ENCODE measurements at regions of chr9 and their contacts with region 1.

Region 1: GRCh38 chr9:13088720-13089427 is 190.6 kb downstream of the MPDZ start:
- DNase-seq: no peak
- H3K4me3 ChIP-seq: no peak overlapping the region
- H3K27me3 ChIP-seq: no peaks in the 10 kb centered on the region
- CTCF ChIP-seq: peak; percentile 74

Region 2: GRCh38 chr9:12719431-12719830 is 369.4 kb before region 1 on chr9:
- CTCF ChIA-PET with region 1: interaction called, 58 read pairs
- POLR2A ChIA-PET with region 1: no interaction called
- DNase-seq: no peak
- H3K4me3 ChIP-seq: no peak overlapping the region
- H3K27me3 ChIP-seq: no peaks in the 10 kb centered on the region
- CTCF ChIP-seq: peak; percentile 53

Region 3: DNA sequence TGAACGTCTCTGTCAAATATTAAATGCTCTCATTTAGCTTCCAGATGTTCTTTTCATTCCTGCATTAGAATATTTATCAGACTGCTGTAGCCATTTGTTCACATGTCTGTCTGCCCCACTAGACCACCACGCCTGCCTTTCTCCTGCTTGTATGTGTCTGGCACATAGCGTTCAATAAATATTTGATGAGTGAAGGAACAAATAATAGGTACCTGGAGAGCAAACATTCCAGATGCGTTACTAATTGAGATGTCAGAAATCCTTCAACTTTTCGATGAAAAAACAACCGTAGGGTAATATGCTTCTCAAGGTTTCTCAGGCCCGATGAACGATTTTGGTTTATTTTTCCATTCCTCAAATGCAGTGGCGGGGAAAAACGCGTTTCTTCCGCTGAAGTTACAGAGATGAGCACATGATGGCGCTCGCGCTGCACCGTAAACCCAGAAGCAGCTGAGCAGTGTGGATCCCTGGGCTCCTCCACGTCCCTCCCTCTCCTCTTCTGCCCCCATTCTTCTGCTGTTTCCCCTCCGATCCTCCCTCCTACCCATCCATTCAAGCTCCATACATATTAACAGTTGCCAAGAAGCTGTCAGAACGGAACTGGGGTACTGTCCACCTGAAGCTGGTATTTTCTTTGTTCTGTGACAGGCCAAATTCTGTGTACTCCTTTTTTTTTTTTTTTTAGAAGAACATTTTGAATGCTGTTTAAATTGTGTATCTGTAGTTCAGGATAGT is 54.7 kb before region 1 on chr9:
- CTCF ChIA-PET with region 1: interaction called, 19 read pairs
- POLR2A ChIA-PET with region 1: interaction called, 6 read pairs
- DNase-seq: no peak
- H3K4me3 ChIP-seq: no peak overlapping the region
- H3K27me3 ChIP-seq: no peaks in the 10 kb centered on the region
- CTCF ChIP-seq: peak; percentile 81

Region 4: DNA sequence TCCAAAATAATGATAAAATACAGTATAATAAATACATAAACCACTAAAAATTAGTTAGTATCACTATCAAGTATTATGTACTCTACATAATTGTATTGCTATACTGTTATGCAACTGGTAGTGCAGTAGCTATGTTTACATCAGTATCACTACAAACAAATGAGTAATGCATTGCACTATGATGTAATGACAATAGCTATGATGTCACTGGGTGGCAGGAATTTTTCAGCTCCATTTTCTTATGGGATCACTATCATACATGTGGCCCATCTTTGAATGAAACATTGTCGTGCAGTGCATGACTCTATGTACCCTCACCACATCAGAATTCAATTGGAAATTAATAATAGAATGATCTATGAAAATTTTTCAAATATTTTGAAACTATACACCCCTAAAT is 10.7 kb before region 1 on chr9:
- CTCF ChIA-PET with region 1: interaction called, 12 read pairs
- POLR2A ChIA-PET with region 1: no interaction called
- DNase-seq: no peak
- H3K4me3 ChIP-seq: no peak overlapping the region
- H3K27me3 ChIP-seq: no peaks in the 10 kb centered on the region
- CTCF ChIP-seq: no peak

Region 5: GRCh38 chr9:13110766-13111417 is 22.0 kb after region 1 on chr9:
- CTCF ChIA-PET with region 1: interaction called, 23 read pairs
- POLR2A ChIA-PET with region 1: no interaction called
- DNase-seq: no peak
- H3K4me3 ChIP-seq: no peak overlapping the region
- H3K27me3 ChIP-seq: no peaks in the 10 kb centered on the region
- CTCF ChIP-seq: no peak